Right lobe of liver (tissue), 6 donors: ENCODE measurements at regions of chr10 and their contacts with region 1.

Region 1: DNA sequence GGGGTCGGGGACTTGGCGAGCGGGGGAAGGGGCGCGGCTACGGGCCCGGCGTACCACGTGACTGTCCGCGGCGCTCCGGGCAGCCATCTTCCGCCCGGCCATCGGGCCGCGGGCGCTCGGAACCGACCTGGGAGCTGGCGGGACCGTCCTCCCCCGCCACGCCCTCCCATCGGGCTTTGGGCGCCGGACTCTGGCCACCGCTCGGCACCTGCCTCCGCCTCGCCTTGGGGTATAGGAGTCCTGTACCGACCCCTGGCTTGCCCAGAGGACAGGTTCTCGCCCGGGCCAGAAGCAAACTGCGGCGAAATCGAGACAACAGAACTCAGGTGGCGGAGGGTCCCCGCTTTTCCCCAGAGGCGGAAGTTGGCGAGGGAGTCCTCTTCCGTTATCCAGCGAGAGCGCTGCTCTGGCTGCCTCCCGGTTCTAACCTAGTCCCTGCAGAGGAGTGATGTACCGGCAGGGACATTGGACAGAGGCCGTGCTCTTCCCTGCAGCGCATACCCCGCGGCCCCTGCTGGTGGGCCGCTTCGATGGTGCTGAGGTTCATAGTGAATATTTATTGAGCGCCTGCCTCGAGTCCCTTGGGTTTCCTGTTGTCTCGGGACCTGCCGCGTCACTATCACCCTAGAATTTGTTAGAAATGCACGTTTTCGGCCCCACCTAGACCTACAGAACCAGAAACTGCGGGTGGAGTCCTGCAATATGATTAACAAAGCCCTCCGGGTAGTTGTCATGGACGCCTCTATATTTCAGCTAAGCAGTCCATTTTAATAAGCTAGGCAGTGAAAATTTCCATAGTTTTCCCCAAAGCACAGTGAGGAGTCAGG is 1.3 kb upstream of the SGMS1 start:
- DNase-seq: peak; percentile 90 to 92 (median 91)
- ATAC-seq: peak; percentile 50 to 72 (median 64)
- H3K4me3 ChIP-seq: peak overlapping the region; percentile 88 to 97 (median 91)
- H3K27ac ChIP-seq: peak overlapping the region; percentile 93 to 97 (median 95)
- H3K4me1 ChIP-seq: peaks cover 0 to 16% (median 6%) of the 10 kb centered on the region in 4 donors
- H3K27me3 ChIP-seq: no peaks in the 10 kb centered on the region
- CTCF ChIP-seq: peak; percentile 32 to 43 (median 37)
- POLR2A ChIP-seq: peak; percentile 58

Region 2: DNA sequence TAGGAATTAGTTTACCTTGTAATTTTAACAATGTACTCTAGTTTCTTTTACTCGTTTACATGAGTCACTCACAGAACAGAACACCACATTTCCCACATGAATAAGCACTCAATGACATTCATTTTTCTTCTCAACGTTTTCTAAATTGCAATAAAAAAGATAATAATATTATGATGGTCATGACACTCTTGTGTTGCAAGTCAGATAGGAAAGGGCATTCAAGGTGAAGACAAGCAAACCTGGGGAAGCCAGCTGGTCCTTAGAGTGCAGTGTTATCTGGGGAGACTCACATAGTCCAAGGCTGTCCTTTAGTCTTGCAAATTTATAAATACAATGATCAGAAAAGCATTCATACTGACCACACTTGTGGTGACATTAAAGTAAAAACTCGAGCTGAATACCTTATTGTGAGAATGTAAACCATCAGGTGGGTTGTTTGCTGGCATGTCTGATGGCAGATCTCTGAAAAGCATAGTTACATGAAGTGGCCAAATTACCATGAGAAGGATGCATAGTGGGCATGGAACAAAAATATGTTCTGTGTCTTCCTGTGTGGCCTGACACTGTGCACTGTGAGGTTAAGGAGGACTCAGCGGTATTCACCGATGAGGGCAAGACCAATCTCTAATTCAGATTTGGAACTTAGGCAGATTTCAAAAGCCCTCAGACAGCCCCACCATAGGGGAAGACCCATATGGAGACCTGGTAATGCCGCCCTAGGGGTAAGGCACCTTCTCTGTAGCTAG is 214.8 kb before region 1 on chr10:
- intact Hi-C with region 1: no loop called
- DNase-seq: no peak
- ATAC-seq: no peak
- H3K4me3 ChIP-seq: no peak overlapping the region
- H3K27ac ChIP-seq: no peak overlapping the region
- H3K4me1 ChIP-seq: peaks cover 0 to 13% (median 1%) of the 10 kb centered on the region in 4 donors
- H3K27me3 ChIP-seq: no peaks in the 10 kb centered on the region
- CTCF ChIP-seq: no peak
- POLR2A ChIP-seq: no peak

Region 3: GRCh38 chr10:50577681-50578350 is 47.3 kb before region 1 on chr10:
- intact Hi-C with region 1: loop called in 1 of 2 experiments (anchors 10 kb)
- DNase-seq: no peak
- ATAC-seq: peak; percentile 69 to 88 (median 83)
- H3K4me3 ChIP-seq: no peak overlapping the region
- H3K27ac ChIP-seq: peak overlapping the region in 2 of 3 donors; percentile 31 to 55
- H3K4me1 ChIP-seq: peaks cover 0 to 65% (median 20%) of the 10 kb centered on the region in 4 donors
- H3K27me3 ChIP-seq: no peaks in the 10 kb centered on the region
- CTCF ChIP-seq: no peak
- POLR2A ChIP-seq: no peak